ENCODE measurements at regions of chr12 and their contacts with region 1.

Region 1: DNA sequence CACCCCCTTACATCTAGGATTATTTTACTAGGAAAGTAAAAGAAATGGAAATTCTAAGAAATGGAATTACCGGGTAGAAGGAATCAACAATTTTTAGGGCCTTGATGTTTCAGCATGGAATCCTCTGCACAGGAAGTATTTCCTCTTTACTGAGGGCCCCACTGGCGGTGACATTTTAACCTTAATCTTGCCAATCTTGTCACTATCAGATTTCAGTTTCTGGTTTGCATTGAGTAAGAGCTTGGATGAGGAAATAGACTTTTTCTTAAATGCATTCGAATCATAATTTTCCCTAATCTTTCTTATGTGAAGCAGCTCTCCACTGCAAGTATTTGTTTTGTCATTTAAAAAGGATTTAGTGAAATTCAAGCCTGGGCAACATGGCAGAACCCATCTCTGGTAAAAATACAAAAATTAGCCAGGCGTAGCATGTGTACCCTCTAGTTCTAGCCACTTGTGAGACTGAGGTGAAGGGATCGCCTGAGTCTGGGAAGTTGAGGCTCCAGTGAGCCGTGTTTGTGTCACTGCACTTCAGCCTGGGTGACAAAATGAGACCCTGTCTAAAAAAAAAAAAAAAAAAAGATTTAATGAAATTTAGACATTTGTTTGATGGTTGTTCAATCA is 40.7 kb downstream of the TPCN1 start:
- DNase-seq: peak in 4 of 5 donors; percentile 10 to 38 (median 28)
- H3K4me3 ChIP-seq: no peak overlapping the region
- H3K4me3 Mint-ChIP-seq: peak overlapping the region; percentile 42 to 69 (median 52)
- H3K27ac ChIP-seq: no peak overlapping the region
- H3K27ac Mint-ChIP-seq: peak overlapping the region; percentile 35 to 87 (median 76)
- H3K4me1 ChIP-seq: peaks cover 21% of the 10 kb centered on the region
- H3K4me1 Mint-ChIP-seq: peaks cover 19 to 42% (median 34%) of the 10 kb centered on the region in 4 donors
- H3K27me3 ChIP-seq: no peaks in the 10 kb centered on the region
- H3K27me3 Mint-ChIP-seq: no peaks in the 10 kb centered on the region

Region 2: DNA sequence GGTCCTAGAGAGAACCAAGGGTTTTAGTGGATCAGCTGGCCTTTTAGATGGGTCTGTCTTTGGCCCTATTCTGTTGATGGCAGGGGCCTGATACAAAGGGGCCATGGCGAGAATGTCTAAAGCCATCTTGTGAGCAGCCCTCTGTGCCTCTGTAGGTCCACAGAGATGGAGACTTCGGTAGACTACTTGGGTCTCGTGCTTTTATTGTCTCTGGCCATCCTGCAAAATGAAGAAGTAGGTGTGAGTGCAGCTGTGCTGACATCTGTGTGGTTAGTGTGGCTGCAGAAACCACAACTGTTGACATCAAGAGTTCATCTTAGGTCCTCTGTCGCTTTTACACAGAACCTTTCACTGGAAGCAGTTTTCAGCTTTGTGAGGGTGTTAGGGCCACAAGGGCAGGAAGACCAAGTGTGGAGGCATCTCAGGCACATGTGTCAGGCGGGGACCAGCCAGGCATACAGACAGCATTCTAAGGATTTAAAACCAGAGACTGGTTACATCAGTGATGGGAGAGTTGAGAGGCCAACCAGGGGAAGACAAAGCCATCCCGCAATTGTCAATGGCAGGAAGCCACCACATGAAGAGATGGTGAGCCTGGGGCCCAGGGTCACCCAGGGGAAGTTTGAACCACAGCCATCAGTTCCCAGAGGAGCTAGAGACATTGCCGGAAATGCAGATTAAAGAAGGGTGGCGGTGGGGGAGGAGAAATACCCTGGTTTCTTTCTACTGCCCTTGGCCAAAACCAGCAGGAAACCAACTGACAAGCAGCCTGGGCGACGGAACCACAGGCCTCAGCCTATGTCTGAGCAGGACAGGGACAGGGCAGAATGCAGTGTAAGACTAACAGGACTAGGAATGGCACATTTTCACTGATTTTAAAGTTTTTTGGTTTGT is 53.7 kb before region 1 on chr12:
- CTCF ChIA-PET with region 1: no interaction called
- POLR2A ChIA-PET with region 1: interaction called, 7 read pairs
- intact Hi-C with region 1: loop called (anchors 5 kb)
- DNase-seq: peak; percentile 68 to 78 (median 73)
- H3K4me3 ChIP-seq: no peak overlapping the region
- H3K4me3 Mint-ChIP-seq: peak overlapping the region; percentile 26 to 83 (median 74)
- H3K27ac ChIP-seq: peak overlapping the region; percentile 40
- H3K27ac Mint-ChIP-seq: peak overlapping the region; percentile 87 to 97 (median 93)
- H3K4me1 ChIP-seq: peaks cover 47% of the 10 kb centered on the region
- H3K4me1 Mint-ChIP-seq: peaks cover 24 to 54% (median 40%) of the 10 kb centered on the region in 4 donors
- H3K27me3 ChIP-seq: no peaks in the 10 kb centered on the region
- H3K27me3 Mint-ChIP-seq: no peaks in the 10 kb centered on the region